IMR-90 (cell line): ENCODE measurements at regions of chr18 and their contacts with region 1.

Region 1: GRCh38 chr18:33839441-33840211 is 261.6 kb downstream of the ASXL3 start:
- DNase-seq: peak; percentile 48
- ATAC-seq: peak; percentile 67
- H3K4me3 ChIP-seq: no peak overlapping the region
- H3K27ac ChIP-seq: no peak overlapping the region
- H3K4me1 ChIP-seq: no peaks in the 10 kb centered on the region
- H3K27me3 ChIP-seq: no peaks in the 10 kb centered on the region
- CTCF ChIP-seq: peak; percentile 58
- POLR2A ChIP-seq: no peak
- RAD21 ChIP-seq: peak; percentile 43

Region 2: GRCh38 chr18:33116376-33116775 is 723.2 kb before region 1 on chr18:
- CTCF ChIA-PET with region 1: no interaction called
- POLR2A ChIA-PET with region 1: no interaction called
- dilution Hi-C with region 1: no loop called
- in situ Hi-C with region 1: no loop called
- intact Hi-C with region 1: no loop called
- DNase-seq: no peak
- ATAC-seq: no peak
- H3K4me3 ChIP-seq: no peak overlapping the region
- H3K27ac ChIP-seq: no peak overlapping the region
- H3K4me1 ChIP-seq: no peaks in the 10 kb centered on the region
- H3K27me3 ChIP-seq: no peaks in the 10 kb centered on the region
- CTCF ChIP-seq: no peak
- POLR2A ChIP-seq: no peak
- RAD21 ChIP-seq: no peak

Region 3: GRCh38 chr18:34048423-34048822 is 208.8 kb after region 1 on chr18:
- CTCF ChIA-PET with region 1: no interaction called
- POLR2A ChIA-PET with region 1: no interaction called
- dilution Hi-C with region 1: no loop called
- in situ Hi-C with region 1: no loop called
- intact Hi-C with region 1: loop called (anchors 10 kb)
- DNase-seq: no peak
- ATAC-seq: no peak
- H3K4me3 ChIP-seq: no peak overlapping the region
- H3K27ac ChIP-seq: no peak overlapping the region
- H3K4me1 ChIP-seq: no peaks in the 10 kb centered on the region
- H3K27me3 ChIP-seq: no peaks in the 10 kb centered on the region
- CTCF ChIP-seq: no peak
- POLR2A ChIP-seq: no peak
- RAD21 ChIP-seq: no peak

Region 4: GRCh38 chr18:34322365-34323289 is 483.0 kb after region 1 on chr18:
- CTCF ChIA-PET with region 1: interaction called, 9 read pairs
- POLR2A ChIA-PET with region 1: no interaction called
- dilution Hi-C with region 1: no loop called
- in situ Hi-C with region 1: no loop called
- intact Hi-C with region 1: loop called (anchors 1 kb)
- DNase-seq: peak; percentile 57
- ATAC-seq: 0 out of 2 replicates have a peak, but pooled peaks have one; percentile 46
- H3K4me3 ChIP-seq: no peak overlapping the region
- H3K27ac ChIP-seq: no peak overlapping the region
- H3K4me1 ChIP-seq: no peaks in the 10 kb centered on the region
- H3K27me3 ChIP-seq: no peaks in the 10 kb centered on the region
- CTCF ChIP-seq: peak; percentile 66
- POLR2A ChIP-seq: no peak
- RAD21 ChIP-seq: peak; percentile 67